MCF 10A (cell line): ENCODE measurements at regions of chr6 and their contacts with region 1.

Region 1: DNA sequence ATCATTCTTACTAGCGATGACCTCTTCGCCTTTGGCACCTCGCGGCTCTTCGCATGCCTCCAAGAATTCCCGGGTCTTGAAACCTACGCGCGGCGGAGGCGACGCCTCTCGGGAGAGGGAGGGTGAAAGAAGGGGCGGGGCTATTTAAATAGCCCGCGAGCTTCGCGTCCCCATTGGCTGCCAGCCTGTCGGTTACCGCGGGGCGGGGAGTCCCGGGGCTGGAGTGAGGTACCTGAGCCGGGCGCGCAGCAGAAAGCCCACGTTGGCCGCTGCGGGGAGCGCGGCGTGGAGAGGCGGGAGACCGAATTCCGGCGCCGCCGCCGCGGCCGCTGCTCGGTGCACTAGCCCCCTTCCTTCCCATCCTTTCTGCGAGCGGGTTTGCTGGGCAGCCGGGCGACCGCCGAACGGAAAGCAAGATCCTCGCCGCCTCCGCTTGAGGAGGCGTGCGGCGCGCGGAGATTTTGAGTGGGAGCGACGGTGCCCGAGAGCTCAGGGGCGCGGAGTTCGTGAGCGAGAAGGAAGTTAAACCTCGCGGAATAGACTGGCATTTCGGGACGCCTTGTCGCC is at the start of gene BMP6:
- DNase-seq: peak; percentile 90
- H3K4me3 Mint-ChIP-seq: peak within 1 kb of the TSS; percentile 79
- H3K27ac Mint-ChIP-seq: no peak within 1 kb of the TSS
- H3K4me1 Mint-ChIP-seq: peaks cover 8% of the 10 kb centered on the region
- H3K27me3 Mint-ChIP-seq: peaks cover 53% of the 10 kb centered on the region
- CTCF ChIP-seq: no peak
- total RNA-seq, gene BMP6: 0.12 and 0.56 TPM in 2 replicates

Region 2: DNA sequence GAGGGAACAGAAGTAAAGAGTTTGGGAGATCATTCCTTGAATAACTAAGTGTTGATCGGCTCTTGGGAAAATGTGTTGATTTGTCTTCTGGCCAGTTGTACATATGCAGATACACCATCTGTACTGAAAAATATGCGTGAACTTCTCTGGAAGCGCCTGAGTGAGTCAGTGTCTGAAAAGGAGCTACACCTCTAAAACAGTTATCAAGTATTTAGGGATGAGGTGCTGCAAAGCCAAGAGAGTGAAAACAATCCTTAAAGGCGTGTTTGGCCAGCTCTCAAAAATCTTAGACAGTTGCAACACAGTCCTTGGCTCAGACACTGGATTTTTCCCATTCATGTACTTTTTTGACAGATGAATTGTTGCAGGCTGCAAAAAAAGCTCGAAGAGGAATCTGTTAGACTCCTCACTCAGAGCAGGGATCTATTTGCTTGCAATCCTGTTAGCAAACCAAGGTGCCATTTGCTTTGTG is 61.2 kb after region 1 on chr6:
- CTCF ChIA-PET with region 1: interaction called, 3 read pairs
- POLR2A ChIA-PET with region 1: interaction called, 4 read pairs
- intact Hi-C with region 1: loop called (anchors 2 kb)
- DNase-seq: peak; percentile 90
- H3K4me3 Mint-ChIP-seq: peak overlapping the region; percentile 54
- H3K27ac Mint-ChIP-seq: peak overlapping the region; percentile 30
- H3K4me1 Mint-ChIP-seq: peaks cover 25% of the 10 kb centered on the region
- H3K27me3 Mint-ChIP-seq: peaks cover 23% of the 10 kb centered on the region
- CTCF ChIP-seq: no peak

Region 3: GRCh38 chr6:7805850-7806214 is 79.9 kb after region 1 on chr6:
- CTCF ChIA-PET with region 1: no interaction called
- POLR2A ChIA-PET with region 1: no interaction called
- intact Hi-C with region 1: no loop called
- DNase-seq: no peak
- H3K4me3 Mint-ChIP-seq: no peak overlapping the region
- H3K27ac Mint-ChIP-seq: no peak overlapping the region
- H3K4me1 Mint-ChIP-seq: no peaks in the 10 kb centered on the region
- H3K27me3 Mint-ChIP-seq: peaks cover 18% of the 10 kb centered on the region
- CTCF ChIP-seq: no peak

Region 4: DNA sequence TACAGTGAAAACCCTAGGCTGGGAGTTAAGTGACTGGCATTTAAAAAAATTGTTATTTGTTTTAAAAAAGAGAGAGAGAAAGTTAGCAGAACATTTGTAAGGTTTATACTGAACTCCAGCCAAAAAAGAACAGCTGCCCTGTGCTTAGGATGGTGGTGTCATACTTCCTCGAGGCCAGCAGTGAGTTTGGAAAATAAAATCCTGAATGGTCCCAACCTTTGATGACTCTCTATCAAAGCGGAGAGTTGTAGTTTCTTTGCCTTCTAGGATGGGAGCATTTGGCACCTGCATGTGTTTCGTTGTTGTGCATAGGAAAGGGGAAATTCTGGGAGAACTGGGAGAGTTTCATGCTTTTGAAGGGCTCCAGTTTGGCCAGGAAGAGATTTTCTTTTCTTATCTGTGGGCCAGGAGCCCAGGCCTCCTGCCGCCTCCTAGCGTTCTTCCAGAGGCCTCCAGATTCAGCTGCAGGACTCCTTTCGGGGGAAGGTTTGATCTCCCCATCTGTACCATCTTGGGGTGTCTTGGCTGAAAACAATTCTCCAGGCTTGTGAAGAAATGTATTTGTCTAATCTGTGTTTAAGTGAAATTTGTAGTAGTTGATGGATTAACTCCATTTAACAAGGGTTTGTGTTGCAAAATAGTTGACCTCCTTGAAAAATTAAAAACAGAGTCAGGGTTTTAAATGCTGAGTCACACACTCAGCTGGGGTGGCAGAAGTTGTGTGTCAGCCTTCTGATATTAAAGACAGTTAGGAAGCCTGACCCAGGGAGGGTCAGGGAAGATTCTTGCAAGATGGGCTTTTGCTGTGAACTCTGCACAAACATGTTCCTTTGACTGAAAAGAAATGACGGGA is 121.3 kb after region 1 on chr6:
- CTCF ChIA-PET with region 1: no interaction called
- POLR2A ChIA-PET with region 1: no interaction called
- intact Hi-C with region 1: no loop called
- DNase-seq: peak; percentile 13
- H3K4me3 Mint-ChIP-seq: no peak overlapping the region
- H3K27ac Mint-ChIP-seq: no peak overlapping the region
- H3K4me1 Mint-ChIP-seq: peaks cover under 1% of the 10 kb centered on the region
- H3K27me3 Mint-ChIP-seq: no peaks in the 10 kb centered on the region
- CTCF ChIP-seq: no peak

Region 5: DNA sequence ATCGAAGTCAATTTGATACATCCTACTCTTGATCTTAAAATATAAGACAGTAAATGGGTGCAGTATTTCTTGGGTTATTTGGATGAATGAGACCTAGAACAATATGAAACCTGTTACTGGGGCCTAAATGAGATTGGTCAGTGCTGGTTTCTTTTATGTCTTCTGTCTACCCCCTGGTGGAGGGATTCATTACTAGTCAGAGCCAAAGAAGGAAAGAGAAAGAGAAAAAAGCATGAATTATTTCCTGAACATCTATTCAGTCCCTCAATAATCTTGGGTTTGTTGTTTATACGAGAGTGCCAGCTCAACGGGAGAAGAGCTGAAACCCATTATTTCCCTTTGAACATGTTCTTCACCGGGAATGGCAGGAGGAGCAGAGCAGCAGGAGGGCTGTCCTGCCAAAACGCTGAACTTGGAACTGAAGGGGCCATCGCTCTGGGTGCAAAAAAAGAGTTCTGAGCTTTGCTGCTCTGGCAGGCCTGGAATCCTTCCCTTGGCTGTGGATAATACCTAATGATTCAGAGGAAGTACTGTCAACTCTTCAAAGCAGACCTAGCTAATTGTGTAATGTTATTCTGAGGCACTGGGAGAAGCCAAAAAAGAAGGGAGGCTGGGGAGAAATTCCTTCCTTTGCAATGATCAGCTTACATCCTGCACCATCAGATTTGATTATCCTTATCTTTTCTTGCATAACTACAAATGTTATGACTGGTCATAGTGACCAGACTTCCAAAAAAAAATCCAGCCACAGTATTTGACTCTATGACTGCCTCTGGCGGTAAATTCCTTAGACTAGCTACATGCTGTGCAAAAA is 266.3 kb after region 1 on chr6:
- CTCF ChIA-PET with region 1: interaction called, 24 read pairs
- POLR2A ChIA-PET with region 1: interaction called, 5 read pairs
- intact Hi-C with region 1: loop called (anchors 1 kb)
- DNase-seq: peak; percentile 52
- H3K4me3 Mint-ChIP-seq: no peak overlapping the region
- H3K27ac Mint-ChIP-seq: no peak overlapping the region
- H3K4me1 Mint-ChIP-seq: peaks cover 14% of the 10 kb centered on the region
- H3K27me3 Mint-ChIP-seq: no peaks in the 10 kb centered on the region
- CTCF ChIP-seq: peak; percentile 35

Region 6: GRCh38 chr6:8006208-8006607 is 280.3 kb after region 1 on chr6:
- CTCF ChIA-PET with region 1: interaction called, 19 read pairs
- POLR2A ChIA-PET with region 1: no interaction called
- intact Hi-C with region 1: loop called (anchors 1 kb)
- DNase-seq: peak; percentile 49
- H3K4me3 Mint-ChIP-seq: no peak overlapping the region
- H3K27ac Mint-ChIP-seq: no peak overlapping the region
- H3K4me1 Mint-ChIP-seq: no peaks in the 10 kb centered on the region
- H3K27me3 Mint-ChIP-seq: no peaks in the 10 kb centered on the region
- CTCF ChIP-seq: peak; percentile 38

Region 7: DNA sequence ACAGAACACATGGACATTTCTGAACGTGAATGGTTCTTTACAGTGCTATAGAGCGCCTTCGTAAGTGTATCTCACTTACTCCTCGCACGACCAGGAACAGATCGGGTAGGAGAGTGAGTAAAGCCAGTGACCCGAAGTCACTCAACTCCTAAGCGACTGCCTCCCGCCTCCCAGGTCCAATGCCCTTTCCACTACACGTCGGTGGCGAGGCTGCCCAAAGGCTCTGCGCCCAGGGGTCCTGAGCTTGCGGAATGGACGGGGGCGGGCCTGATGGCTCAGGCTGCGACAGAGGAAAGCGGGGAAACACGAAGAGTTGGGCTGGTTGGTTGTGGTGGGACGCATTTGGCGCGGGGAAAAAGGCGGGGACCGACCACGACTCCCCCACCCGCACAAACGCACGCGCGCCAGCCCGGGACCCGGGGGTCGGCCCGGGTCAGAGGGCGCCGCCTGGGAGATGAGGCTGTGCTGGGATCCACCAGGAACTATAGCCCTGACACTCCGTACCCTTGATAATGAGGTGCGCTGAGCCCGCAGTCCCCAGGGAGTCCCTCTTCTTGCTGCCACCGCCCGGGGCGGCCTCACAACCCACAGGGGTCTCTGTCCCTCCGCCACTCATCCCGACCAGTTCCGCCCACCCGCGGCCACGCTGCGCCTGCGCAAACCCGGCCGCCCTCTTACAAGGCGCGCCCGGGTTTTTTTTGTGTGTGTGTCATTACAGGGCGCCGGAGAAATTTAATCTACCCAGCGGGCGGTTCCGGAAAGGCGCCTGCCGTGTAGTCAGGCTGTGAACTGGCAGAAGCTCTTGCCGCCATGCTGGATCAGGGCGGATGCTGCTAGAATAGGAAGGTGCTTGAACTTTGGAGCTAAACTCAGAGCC is 338.1 kb after region 1 on chr6 and contains the start of gene BLOC1S5:
- CTCF ChIA-PET with region 1: interaction called, 41 read pairs
- POLR2A ChIA-PET with region 1: no interaction called
- intact Hi-C with region 1: loop called (anchors 1 kb)
- DNase-seq: peak; percentile 96
- H3K4me3 Mint-ChIP-seq: peak within 1 kb of the TSS; percentile 86
- H3K27ac Mint-ChIP-seq: peak within 1 kb of the TSS; percentile 82
- H3K4me1 Mint-ChIP-seq: peaks cover 5% of the 10 kb centered on the region
- H3K27me3 Mint-ChIP-seq: no peaks in the 10 kb centered on the region
- CTCF ChIP-seq: no peak
- total RNA-seq, gene BLOC1S5: 7.7 and 10.9 TPM in 2 replicates